Mammary epithelial cell (primary cell): ENCODE measurements at regions of chr6 and their contacts with region 1.

Region 1: DNA sequence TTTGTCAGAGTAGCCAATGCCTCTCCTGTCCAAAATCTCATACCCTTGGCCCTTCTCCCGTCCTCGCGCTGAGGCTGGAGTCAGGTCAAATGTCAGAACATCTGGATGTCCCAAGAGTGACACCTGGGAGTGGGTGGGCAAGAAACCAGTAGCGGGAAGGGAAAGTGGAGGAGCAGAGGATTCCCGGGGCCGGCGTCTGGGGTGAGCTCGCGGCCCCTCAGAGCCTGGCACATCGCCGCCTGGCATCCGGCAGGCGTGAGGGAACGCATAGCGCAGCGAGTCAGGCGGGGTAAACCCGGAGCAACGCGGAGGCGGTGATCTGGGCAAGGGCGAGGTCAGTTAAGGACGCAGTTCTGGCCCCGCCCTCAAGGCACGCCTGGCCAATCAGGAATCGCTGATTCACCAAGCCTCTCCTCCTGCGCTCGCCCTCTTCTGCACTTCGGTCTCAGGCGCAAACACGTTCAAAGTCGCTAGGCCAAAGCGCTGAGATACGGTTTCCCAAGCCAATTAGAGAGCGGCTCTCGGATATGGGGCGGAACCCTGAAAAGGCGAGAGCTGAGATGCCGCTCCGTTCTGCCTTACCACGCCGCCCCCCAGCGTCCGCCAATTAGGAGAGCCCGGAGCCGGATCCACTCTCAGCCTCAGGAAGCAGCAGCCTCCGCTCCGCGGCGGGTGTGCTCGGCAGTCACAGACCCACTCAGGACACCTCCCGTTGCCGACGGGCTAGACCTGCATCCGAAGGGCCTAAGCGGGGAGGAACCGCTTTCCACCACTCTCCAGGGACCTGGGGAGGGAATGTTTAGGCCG is 22.5 kb downstream of the VPS52 start:
- DNase-seq: peak; percentile 99
- H3K4me3 ChIP-seq: peak overlapping the region; percentile 52 to 78 (median 63)
- H3K27ac ChIP-seq: peak overlapping the region; percentile 68
- H3K4me1 ChIP-seq: peaks cover 26% of the 10 kb centered on the region
- H3K27me3 ChIP-seq: no peaks in the 10 kb centered on the region
- CTCF ChIP-seq: peak in 1 of 2 donors; percentile 19

Region 2: GRCh38 chr6:33014841-33015634 is 234.1 kb before region 1 on chr6:
- CTCF ChIA-PET with region 1: no interaction called
- dilution Hi-C with region 1: no loop called
- in situ Hi-C with region 1: loop called (anchors 5 to 25 kb)
- intact Hi-C with region 1: loop called (anchors 1 kb)
- DNase-seq: peak; percentile 52
- H3K4me3 ChIP-seq: no peak overlapping the region
- H3K27ac ChIP-seq: no peak overlapping the region
- H3K4me1 ChIP-seq: no peaks in the 10 kb centered on the region
- H3K27me3 ChIP-seq: peaks cover 11% of the 10 kb centered on the region
- CTCF ChIP-seq: peak; percentile 67 to 73

Region 3: GRCh38 chr6:33123732-33124524 is 125.2 kb before region 1 on chr6:
- CTCF ChIA-PET with region 1: interaction called, 4 read pairs
- dilution Hi-C with region 1: no loop called
- in situ Hi-C with region 1: loop called in 1 of 2 experiments (anchors 10 kb)
- intact Hi-C with region 1: loop called (anchors 1 kb)
- DNase-seq: no peak
- H3K4me3 ChIP-seq: no peak overlapping the region
- H3K27ac ChIP-seq: no peak overlapping the region
- H3K4me1 ChIP-seq: no peaks in the 10 kb centered on the region
- H3K27me3 ChIP-seq: no peaks in the 10 kb centered on the region
- CTCF ChIP-seq: peak; percentile 49 to 53

Region 4: DNA sequence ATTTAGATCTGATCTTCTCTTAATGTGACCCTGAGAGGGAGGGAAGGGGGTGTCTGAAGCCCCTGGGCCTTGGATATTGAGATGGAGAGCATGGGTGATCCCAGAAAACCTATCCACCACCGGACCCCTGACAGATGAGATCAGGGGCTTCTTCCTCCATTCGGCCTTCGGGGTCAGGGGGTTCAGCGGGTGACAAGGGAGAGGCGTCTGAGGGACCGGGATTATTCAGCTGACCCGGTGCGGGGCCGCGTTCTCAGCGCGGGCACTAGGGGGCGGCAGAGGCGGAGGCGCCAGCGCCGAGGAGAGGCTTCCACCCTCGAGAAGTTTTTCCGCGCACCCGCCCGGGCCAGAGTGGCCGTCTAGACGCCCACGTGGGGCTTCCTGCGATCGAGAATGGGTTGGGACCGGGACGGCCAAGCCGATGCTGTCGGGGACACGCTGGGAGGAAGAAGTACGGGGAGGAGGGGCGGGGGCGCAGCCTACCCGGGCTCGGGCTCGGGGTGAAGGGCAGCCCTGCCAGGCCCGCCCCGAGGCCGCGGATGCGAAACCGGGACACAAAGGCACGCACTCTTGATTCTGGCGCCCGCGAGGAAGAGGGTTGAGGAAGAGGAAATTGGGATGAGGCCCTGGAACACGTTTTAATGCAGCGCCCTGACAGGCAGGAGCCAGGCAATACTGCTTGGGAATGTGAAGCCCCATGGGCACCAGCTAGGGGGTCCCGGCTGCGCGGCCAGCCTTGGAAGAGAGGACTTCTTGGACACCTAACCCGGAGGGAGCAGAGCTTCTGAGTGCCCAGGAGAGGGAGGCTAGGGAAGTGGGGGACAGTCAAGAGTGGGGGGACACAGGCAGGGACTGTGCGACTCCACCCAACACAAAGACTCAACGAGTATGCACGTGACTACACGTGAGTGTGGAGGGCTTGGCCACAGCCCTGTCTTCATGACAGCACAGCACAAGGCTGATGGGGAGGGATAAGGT is 87.5 kb before region 1 on chr6:
- CTCF ChIA-PET with region 1: no interaction called
- dilution Hi-C with region 1: no loop called
- in situ Hi-C with region 1: no loop called
- intact Hi-C with region 1: loop called (anchors 1 kb)
- DNase-seq: peak; percentile 42
- H3K4me3 ChIP-seq: peak overlapping the region; percentile 22 to 64 (median 44)
- H3K27ac ChIP-seq: no peak overlapping the region
- H3K4me1 ChIP-seq: peaks cover 6% of the 10 kb centered on the region
- H3K27me3 ChIP-seq: no peaks in the 10 kb centered on the region
- CTCF ChIP-seq: peak; percentile 75 to 97

Region 5: DNA sequence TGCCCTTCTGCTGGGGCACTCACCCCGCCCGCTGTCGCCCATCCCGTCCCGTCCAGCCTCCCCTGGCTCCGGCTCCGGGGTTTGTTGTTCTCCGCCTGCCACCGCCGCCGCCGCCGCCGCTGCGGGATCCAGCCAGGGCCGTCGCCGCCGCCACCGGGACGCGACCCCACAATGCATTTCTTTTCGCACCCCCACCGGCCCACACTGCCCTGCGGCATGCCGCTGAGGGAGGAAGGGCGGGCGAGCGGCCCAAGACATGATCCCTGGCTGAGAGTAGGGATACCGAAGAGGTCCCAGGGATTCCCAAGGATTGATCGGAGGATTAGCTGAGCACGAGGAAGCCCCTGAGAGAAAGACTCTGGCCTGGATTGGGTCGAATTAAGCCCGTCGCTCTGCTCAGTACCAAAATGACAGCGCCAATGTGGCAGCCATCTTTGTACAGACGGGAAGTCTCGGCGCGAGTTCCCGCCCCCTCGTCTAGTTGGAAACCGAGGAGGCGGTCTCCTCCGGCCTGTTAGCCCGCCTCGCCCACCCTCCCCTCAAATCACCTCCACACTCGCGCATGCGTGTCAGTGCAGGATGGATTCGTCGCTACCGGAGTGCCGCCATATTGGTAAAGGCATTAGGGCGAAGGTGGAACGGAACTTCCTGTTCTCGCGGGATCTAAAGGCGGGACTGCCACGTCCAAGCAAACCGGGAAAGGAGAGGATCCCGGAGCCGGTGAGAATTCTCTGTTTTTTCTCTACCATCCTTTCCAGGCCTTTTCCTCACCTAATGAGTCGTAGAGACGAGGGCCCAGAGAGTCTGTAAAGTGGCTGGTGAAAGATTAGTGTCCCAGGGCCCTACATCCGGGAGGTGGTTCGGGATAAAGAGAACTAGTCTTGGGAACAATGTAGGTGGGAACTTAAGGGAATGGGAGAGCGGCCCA is 48.6 kb before region 1 on chr6 and contains the starts of genes RXRB and SLC39A7:
- CTCF ChIA-PET with region 1: interaction called, 4 read pairs
- dilution Hi-C with region 1: no loop called
- in situ Hi-C with region 1: no loop called
- intact Hi-C with region 1: loop called (anchors 1 kb)
- DNase-seq: peak; percentile 99
- H3K4me3 ChIP-seq: peak within 1 kb of the TSS; percentile 77 to 97 (median 78)
- H3K27ac ChIP-seq: peak within 1 kb of the TSS; percentile 88
- H3K4me1 ChIP-seq: peaks cover 23% of the 10 kb centered on the region
- H3K27me3 ChIP-seq: no peaks in the 10 kb centered on the region
- CTCF ChIP-seq: no peak
- total RNA-seq, gene RXRB: 15.0 to 30.7 TPM
- total RNA-seq, gene SLC39A7: 52.8 to 99.3 TPM

Region 6: DNA sequence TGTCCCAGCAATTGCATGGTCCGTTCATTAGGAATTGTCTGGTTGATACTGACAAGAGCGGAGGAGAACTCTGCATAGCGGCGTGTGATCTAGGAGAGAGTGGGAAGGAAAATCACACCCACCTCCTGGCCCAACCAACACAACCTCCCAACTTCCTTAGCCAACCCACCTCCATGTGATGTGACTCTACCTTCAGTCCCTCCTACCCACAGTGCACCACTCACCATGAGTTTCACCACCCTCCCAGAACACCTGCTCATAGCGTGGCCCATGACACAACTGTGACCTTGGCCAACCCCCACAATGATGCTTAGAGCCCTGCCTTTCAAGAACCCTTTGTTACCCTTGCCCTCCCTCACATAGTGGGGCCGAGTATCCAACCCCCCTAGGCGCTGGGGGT is 14.9 kb after region 1 on chr6:
- CTCF ChIA-PET with region 1: no interaction called
- dilution Hi-C with region 1: no loop called
- in situ Hi-C with region 1: no loop called
- intact Hi-C with region 1: no loop called
- DNase-seq: no peak
- H3K4me3 ChIP-seq: no peak overlapping the region
- H3K27ac ChIP-seq: no peak overlapping the region
- H3K4me1 ChIP-seq: peaks cover 12% of the 10 kb centered on the region
- H3K27me3 ChIP-seq: no peaks in the 10 kb centered on the region
- CTCF ChIP-seq: no peak